Endothelial cell of umbilical vein (primary cell): ENCODE measurements at regions of chr18 and their contacts with region 1.

Region 1: GRCh38 chr18:56541793-56542192 is 96.6 kb downstream of the TXNL1 start:
- DNase-seq: no peak
- H3K4me3 ChIP-seq: no peak overlapping the region
- H3K27ac ChIP-seq: no peak overlapping the region
- H3K4me1 ChIP-seq: no peaks in the 10 kb centered on the region
- H3K27me3 ChIP-seq: peaks cover 2% of the 10 kb centered on the region in 2 experiments
- CTCF ChIP-seq: no peak
- POLR2A ChIP-seq: no peak

Region 2: GRCh38 chr18:55555395-55556027 is 986.3 kb before region 1 on chr18:
- CTCF ChIA-PET with region 1: no interaction called
- POLR2A ChIA-PET with region 1: interaction called, 11 read pairs
- dilution Hi-C with region 1: no loop called
- intact Hi-C with region 1: no loop called
- DNase-seq: no peak
- H3K4me3 ChIP-seq: no peak overlapping the region
- H3K27ac ChIP-seq: no peak overlapping the region
- H3K4me1 ChIP-seq: no peaks in the 10 kb centered on the region
- H3K27me3 ChIP-seq: no peaks in the 10 kb centered on the region
- CTCF ChIP-seq: no peak
- POLR2A ChIP-seq: no peak

Region 3: DNA sequence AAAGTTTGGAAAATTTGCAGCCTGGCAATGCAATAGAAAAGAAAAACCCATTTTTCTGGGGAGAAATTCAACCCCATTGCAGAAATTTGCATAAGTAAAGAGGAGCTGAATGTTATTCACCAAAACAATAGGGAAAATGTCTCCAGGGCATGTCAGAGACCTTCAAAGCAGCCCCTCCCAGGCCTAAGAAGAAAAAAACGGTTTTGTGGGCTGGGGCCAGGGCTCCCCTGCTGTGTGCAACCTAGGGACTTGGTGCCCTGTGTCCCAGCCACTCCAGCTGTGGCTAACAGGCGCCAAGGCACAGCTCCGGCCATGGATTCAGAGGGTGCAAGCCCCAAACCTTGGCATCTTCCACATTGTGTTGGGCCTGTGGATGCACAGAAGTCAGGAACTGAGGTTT is 127.9 kb before region 1 on chr18:
- CTCF ChIA-PET with region 1: no interaction called
- POLR2A ChIA-PET with region 1: no interaction called
- dilution Hi-C with region 1: no loop called
- intact Hi-C with region 1: no loop called
- DNase-seq: no peak
- H3K4me3 ChIP-seq: no peak overlapping the region
- H3K27ac ChIP-seq: no peak overlapping the region
- H3K4me1 ChIP-seq: no peaks in the 10 kb centered on the region
- H3K27me3 ChIP-seq: no peaks in the 10 kb centered on the region
- CTCF ChIP-seq: no peak
- POLR2A ChIP-seq: no peak